ENCODE measurements at regions of chr7 and their contacts with region 1.

Region 1: GRCh38 chr7:87199700-87200450 is 19.7 kb downstream of the TMEM243 start:
- DNase-seq: no peak
- ATAC-seq: no peak
- H3K4me3 ChIP-seq: no peak overlapping the region
- H3K4me3 Mint-ChIP-seq: peak overlapping the region; percentile 9
- H3K27ac ChIP-seq: no peak overlapping the region
- H3K27ac Mint-ChIP-seq: peak overlapping the region; percentile 68
- H3K4me1 ChIP-seq: peaks cover 18% of the 10 kb centered on the region
- H3K4me1 Mint-ChIP-seq: peaks cover 74% of the 10 kb centered on the region
- H3K27me3 ChIP-seq: no peaks in the 10 kb centered on the region
- H3K27me3 Mint-ChIP-seq: no peaks in the 10 kb centered on the region
- CTCF ChIP-seq: no peak

Region 2: DNA sequence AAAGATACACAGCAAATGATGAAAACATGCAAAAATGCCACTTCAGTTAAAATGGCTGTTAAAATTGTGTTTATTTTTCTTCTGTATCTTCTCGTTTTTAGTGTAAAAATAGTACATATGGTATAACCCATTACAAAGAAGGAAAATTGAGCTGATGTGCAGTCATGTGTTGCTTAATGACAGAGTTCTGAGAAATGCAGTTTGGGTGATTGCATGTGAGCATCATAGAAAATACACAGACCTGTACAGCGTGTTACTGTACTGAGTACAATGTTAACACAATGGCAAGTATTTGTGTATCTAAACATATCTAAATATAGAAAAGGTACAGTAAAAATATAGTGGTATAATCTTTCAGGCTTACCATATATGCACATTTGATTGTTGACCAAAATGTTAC is 40.3 kb before region 1 on chr7:
- CTCF ChIA-PET with region 1: no interaction called
- POLR2A ChIA-PET with region 1: interaction called, 3 read pairs
- intact Hi-C with region 1: loop called (anchors 5 kb)
- DNase-seq: no peak
- ATAC-seq: no peak
- H3K4me3 ChIP-seq: no peak overlapping the region
- H3K4me3 Mint-ChIP-seq: no peak overlapping the region
- H3K27ac ChIP-seq: no peak overlapping the region
- H3K27ac Mint-ChIP-seq: no peak overlapping the region
- H3K4me1 ChIP-seq: peaks cover 2% of the 10 kb centered on the region
- H3K4me1 Mint-ChIP-seq: peaks cover 73% of the 10 kb centered on the region
- H3K27me3 ChIP-seq: no peaks in the 10 kb centered on the region
- H3K27me3 Mint-ChIP-seq: no peaks in the 10 kb centered on the region
- CTCF ChIP-seq: no peak

Region 3: DNA sequence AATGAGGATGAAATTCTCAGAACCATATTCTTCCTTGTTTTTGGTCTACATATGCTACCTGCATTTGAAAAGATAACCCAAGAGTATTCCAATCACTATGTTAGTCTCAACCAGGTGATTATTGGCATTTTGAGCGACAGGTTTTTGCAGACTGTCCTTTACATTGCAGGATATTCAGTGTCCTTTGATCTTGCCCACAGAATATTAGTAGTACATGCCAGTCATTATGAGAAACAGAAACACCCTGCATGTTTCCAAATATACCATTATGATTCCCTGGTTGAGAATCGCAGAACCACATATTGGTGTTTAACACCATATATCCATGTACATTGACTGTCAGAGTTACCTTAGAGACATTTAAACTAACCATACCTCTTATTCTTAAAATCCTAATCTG is 10.9 kb before region 1 on chr7:
- CTCF ChIA-PET with region 1: interaction called, 4 read pairs
- POLR2A ChIA-PET with region 1: interaction called, 11 read pairs
- intact Hi-C with region 1: no loop called
- DNase-seq: no peak
- ATAC-seq: no peak
- H3K4me3 ChIP-seq: no peak overlapping the region
- H3K4me3 Mint-ChIP-seq: no peak overlapping the region
- H3K27ac ChIP-seq: no peak overlapping the region
- H3K27ac Mint-ChIP-seq: peak overlapping the region; percentile 68
- H3K4me1 ChIP-seq: no peaks in the 10 kb centered on the region
- H3K4me1 Mint-ChIP-seq: peaks cover 61% of the 10 kb centered on the region
- H3K27me3 ChIP-seq: no peaks in the 10 kb centered on the region
- H3K27me3 Mint-ChIP-seq: no peaks in the 10 kb centered on the region
- CTCF ChIP-seq: no peak

Region 4: GRCh38 chr7:87213811-87214210 is 13.9 kb after region 1 on chr7:
- CTCF ChIA-PET with region 1: interaction called, 3 read pairs
- POLR2A ChIA-PET with region 1: interaction called, 80 read pairs
- intact Hi-C with region 1: no loop called
- DNase-seq: no peak
- ATAC-seq: no peak
- H3K4me3 ChIP-seq: no peak overlapping the region
- H3K4me3 Mint-ChIP-seq: peak overlapping the region; percentile 90
- H3K27ac ChIP-seq: peak overlapping the region in 1 of 2 donors; percentile 3
- H3K27ac Mint-ChIP-seq: peak overlapping the region; percentile 81
- H3K4me1 ChIP-seq: peaks cover 91% of the 10 kb centered on the region
- H3K4me1 Mint-ChIP-seq: peaks cover 92% of the 10 kb centered on the region
- H3K27me3 ChIP-seq: no peaks in the 10 kb centered on the region
- H3K27me3 Mint-ChIP-seq: no peaks in the 10 kb centered on the region
- CTCF ChIP-seq: no peak

Region 5: DNA sequence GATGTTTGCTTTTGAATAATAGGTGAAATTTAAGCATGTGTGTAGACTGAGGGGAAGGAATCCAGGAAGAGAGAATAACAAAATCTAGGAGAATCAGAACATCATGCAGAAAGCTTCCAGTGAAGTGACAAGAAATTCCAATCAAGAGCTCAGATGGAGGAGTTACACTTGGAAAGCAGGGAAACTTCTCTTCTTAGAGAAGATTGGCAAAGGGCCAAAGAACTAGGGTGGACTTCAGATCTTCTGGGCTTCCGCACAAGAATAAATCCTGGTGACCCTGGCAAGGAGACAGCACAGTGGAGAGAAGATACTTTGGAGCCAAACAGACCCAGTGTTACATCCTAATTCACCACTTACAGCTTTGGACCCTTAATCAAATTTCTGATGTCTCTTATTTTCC is 52.3 kb after region 1 on chr7:
- CTCF ChIA-PET with region 1: no interaction called
- POLR2A ChIA-PET with region 1: no interaction called
- intact Hi-C with region 1: no loop called
- DNase-seq: no peak
- ATAC-seq: no peak
- H3K4me3 ChIP-seq: no peak overlapping the region
- H3K4me3 Mint-ChIP-seq: no peak overlapping the region
- H3K27ac ChIP-seq: no peak overlapping the region
- H3K27ac Mint-ChIP-seq: no peak overlapping the region
- H3K4me1 ChIP-seq: no peaks in the 10 kb centered on the region
- H3K4me1 Mint-ChIP-seq: no peaks in the 10 kb centered on the region
- H3K27me3 ChIP-seq: peaks cover 0 to 4% of the 10 kb centered on the region in 2 experiments
- H3K27me3 Mint-ChIP-seq: peaks cover 25% of the 10 kb centered on the region
- CTCF ChIP-seq: no peak

Measured in CD4-positive, alpha-beta T cell (primary cell).